ENCODE measurements at regions of chr6 and their contacts with region 1.

Region 1: DNA sequence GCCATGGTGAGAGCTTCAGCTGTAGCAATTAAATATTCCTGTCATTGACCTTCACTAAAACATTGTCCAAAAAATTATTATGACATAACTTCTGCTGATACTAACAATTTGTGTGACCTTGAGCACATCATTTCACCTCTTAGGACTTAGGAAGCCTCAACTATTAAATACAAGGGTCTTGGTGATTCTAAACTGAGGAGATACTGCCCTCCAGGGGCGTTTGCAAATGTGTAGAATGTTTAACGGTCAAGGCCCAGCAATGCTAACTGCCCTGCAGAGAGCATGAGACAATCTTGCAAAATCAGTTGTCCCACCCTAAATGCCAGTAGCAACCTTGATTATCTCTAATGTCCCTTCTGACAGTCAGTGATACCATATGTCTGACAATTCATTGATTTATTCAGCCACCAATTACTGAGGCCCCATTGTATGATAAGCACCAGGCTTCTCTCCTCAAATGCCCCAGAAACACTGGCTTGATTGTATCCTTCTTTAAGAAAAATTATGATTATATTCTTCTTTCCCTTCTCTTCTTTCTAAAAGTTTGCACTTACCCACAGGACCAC is 284.1 kb upstream of the PLN start:
- DNase-seq: no peak
- ATAC-seq: peak in 1 of 2 donors; percentile 39
- H3K4me3 ChIP-seq: no peak overlapping the region
- H3K27ac ChIP-seq: no peak overlapping the region
- H3K4me1 ChIP-seq: no peaks in the 10 kb centered on the region
- H3K27me3 ChIP-seq: no peaks in the 10 kb centered on the region
- CTCF ChIP-seq: peak; percentile 10 to 56 (median 25)
- POLR2A ChIP-seq: no peak

Region 2: DNA sequence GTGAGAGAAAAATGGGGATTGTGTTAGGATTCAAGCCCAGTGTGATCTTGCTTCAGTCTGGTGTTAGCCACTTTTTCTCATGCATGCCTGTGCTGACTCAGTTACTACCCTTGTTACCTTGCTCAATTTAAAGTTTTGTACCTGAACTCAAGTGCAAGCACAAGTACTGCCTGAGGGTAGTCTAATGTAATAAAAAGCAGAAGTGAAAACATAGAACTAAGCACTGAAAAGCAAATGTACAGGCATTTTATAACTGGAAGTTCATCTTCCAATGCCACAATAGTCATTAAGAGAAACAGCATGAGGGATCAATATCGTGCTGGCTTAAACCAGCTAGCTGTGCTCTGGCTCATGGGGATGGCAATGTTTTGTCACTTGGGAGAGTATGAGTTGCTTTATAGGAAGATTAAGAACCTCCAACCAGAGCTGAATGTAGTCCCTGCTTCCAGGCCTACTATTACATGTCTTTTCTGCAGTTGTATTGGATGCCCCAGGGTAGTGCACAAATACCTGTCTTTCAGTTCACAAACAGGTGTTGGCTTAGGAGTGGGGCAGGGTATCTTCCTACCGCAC is 308.2 kb before region 1 on chr6:
- in situ Hi-C with region 1: loop called in 1 of 4 experiments (anchors 25 kb)
- intact Hi-C with region 1: no loop called
- DNase-seq: no peak
- ATAC-seq: no peak
- H3K4me3 ChIP-seq: no peak overlapping the region
- H3K27ac ChIP-seq: no peak overlapping the region
- H3K4me1 ChIP-seq: no peaks in the 10 kb centered on the region
- H3K27me3 ChIP-seq: no peaks in the 10 kb centered on the region
- CTCF ChIP-seq: no peak
- POLR2A ChIP-seq: no peak

Region 3: GRCh38 chr6:117976030-117976651 is 287.9 kb before region 1 on chr6:
- in situ Hi-C with region 1: loop called (anchors 10 to 25 kb)
- intact Hi-C with region 1: loop called (anchors 1 kb)
- DNase-seq: no peak
- ATAC-seq: no peak
- H3K4me3 ChIP-seq: no peak overlapping the region
- H3K27ac ChIP-seq: no peak overlapping the region
- H3K4me1 ChIP-seq: no peaks in the 10 kb centered on the region
- H3K27me3 ChIP-seq: no peaks in the 10 kb centered on the region
- CTCF ChIP-seq: peak in 4 of 5 experiments; percentile 20 to 62 (median 39)
- POLR2A ChIP-seq: no peak

Measured in gastrocnemius medialis (tissue), 4 donors.